Thyroid gland (tissue), 4 donors: ENCODE measurements at regions of chr12 and their contacts with region 1.

Region 1: DNA sequence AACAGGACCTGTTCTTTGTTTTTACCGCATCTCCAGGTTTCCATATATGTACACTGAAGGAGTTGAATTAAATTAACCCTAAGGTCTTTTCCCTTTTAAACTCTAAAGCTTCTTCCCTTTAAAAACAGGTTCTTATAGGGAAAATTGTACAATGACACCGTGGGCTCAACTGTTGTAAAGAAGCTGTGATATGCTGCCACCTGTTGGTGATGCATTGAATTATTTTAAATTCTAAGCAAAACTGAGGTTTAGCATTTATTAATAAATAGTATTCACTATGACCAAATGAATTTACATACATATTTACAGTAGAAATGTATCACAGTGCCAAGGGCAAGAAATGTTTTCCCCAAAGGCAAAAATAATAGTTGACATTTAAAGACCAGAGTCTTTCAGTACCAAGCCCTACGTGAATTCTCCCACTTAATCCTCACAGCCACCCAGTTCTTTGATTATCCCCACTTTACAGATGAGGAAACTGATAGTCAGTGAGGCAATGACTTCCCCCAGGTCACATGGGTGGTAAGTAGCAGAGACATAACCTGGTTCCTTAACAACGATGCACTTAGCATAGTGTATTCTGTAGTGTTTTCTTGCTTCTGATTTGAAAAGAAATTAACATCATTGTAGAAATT is 35.7 kb upstream of the TMEM263 start:
- DNase-seq: no peak
- H3K4me3 ChIP-seq: no peak overlapping the region
- H3K27ac ChIP-seq: no peak overlapping the region
- H3K4me1 ChIP-seq: no peaks in the 10 kb centered on the region
- H3K27me3 ChIP-seq: no peaks in the 10 kb centered on the region
- CTCF ChIP-seq: peak; percentile 69 to 88 (median 76)
- POLR2A ChIP-seq: no peak

Region 2: DNA sequence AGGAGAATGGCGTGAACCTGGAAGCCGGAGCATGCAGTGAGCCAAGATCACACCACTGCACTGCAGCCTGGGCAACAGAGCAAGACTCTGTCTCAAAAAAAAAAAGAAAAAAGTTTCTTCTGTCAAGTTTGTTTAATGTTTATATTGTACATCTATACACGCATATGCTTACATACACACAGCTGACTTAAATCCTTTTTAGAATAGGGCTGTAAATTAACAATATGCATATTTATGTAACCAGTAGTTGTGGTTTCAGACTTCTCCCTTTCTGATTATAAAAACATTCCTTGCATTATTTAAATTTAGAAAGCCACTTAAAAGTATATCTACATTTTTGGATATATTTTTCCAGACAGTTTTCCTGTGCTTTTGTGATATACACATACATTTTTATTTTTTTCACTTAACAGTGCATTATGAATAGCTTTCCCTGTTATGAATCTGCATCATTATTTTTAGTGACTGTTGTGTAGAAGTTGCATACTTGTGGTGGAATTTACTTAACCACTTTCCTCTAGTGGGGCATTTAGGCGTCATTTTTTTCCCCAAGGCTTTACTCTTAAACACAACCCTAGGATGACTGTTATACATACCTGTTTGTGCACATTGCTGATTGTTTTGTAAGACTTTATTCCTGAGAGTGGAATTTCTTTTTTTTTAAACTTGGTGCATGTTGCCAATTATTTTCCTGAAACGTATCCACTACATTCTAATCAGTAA is 533.1 kb before region 1 on chr12:
- intact Hi-C with region 1: loop called (anchors 5 kb)
- DNase-seq: no peak
- H3K4me3 ChIP-seq: no peak overlapping the region
- H3K27ac ChIP-seq: no peak overlapping the region
- H3K4me1 ChIP-seq: no peaks in the 10 kb centered on the region
- H3K27me3 ChIP-seq: no peaks in the 10 kb centered on the region
- CTCF ChIP-seq: no peak
- POLR2A ChIP-seq: no peak